CD4-positive, alpha-beta memory T cell (primary cell): ENCODE measurements at regions of chr12 and their contacts with region 1.

Region 1: GRCh38 chr12:48197971-48198671 is 5.0 kb downstream of the OR10AD1 start:
- DNase-seq: peak; percentile 87 to 94 (median 89)
- H3K4me3 ChIP-seq: peak overlapping the region; percentile 82 to 87
- H3K4me3 Mint-ChIP-seq: peak overlapping the region; percentile 84 to 95 (median 92)
- H3K27ac ChIP-seq: peak overlapping the region; percentile 99
- H3K27ac Mint-ChIP-seq: peak overlapping the region; percentile 77 to 100 (median 97)
- H3K4me1 ChIP-seq: peaks cover 42% of the 10 kb centered on the region
- H3K4me1 Mint-ChIP-seq: peaks cover 27 to 58% (median 40%) of the 10 kb centered on the region in 4 donors
- H3K27me3 ChIP-seq: no peaks in the 10 kb centered on the region
- H3K27me3 Mint-ChIP-seq: no peaks in the 10 kb centered on the region

Region 2: DNA sequence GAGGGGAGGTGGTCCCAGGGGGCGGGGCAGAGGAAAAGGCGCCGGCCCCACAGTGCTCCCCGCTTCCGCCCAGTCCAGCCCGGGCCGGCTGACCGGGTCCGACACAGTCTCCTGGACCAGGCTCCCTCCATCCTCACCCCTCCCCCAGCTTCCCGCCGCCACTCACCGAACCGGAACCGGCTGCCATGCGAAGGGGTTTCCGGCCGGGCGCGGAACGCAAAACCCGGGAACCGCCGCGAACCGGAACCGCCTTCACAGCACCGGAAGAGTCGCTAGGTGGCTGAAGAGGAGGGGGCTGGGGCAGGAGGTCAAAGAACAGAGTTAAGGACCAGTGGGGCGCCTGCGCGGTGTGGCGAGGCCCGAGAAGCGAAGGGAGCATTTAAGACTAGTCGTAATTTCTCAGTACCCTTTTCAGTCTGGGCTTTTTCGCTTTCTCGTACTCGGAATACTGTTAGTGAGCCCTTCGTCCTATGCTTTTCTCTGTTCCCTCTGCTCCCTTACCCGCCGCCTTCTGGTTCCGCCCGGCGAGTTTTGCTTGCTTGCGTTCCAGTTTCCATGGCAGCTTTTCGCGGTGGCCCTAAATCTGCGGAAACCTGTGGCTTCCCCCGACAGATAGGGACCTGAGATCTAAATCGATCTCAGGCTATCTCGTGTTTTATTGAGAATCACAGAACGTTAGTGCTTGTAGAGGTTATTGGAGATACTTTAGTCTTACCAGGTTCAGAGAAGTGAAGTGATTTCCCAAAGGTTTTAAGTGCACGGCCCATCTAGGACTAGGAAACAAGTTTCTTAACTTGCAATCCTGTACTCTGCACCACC is 92.0 kb before region 1 on chr12 and contains the start of gene SENP1:
- CTCF ChIA-PET with region 1: interaction called, 3 read pairs
- POLR2A ChIA-PET with region 1: interaction called, 28 read pairs
- intact Hi-C with region 1: loop called (anchors 2 kb)
- DNase-seq: peak; percentile 91 to 93 (median 92)
- H3K4me3 ChIP-seq: peak within 1 kb of the TSS; percentile 84 to 93
- H3K4me3 Mint-ChIP-seq: peak within 1 kb of the TSS; percentile 89 to 97 (median 92)
- H3K27ac ChIP-seq: peak within 1 kb of the TSS; percentile 96
- H3K27ac Mint-ChIP-seq: peak within 1 kb of the TSS; percentile 93 to 100 (median 99)
- H3K4me1 ChIP-seq: peaks cover 42% of the 10 kb centered on the region
- H3K4me1 Mint-ChIP-seq: peaks cover 42 to 65% (median 52%) of the 10 kb centered on the region in 4 donors
- H3K27me3 ChIP-seq: no peaks in the 10 kb centered on the region
- H3K27me3 Mint-ChIP-seq: no peaks in the 10 kb centered on the region
- total RNA-seq, gene SENP1: 28.7 to 35.1 TPM

Region 3: GRCh38 chr12:48157018-48157888 is 40.9 kb before region 1 on chr12 and contains the start of gene ASB8:
- CTCF ChIA-PET with region 1: interaction called, 33 read pairs
- POLR2A ChIA-PET with region 1: interaction called, 82 read pairs
- intact Hi-C with region 1: loop called (anchors 1 kb)
- DNase-seq: peak; percentile 98 to 99 (median 98)
- H3K4me3 ChIP-seq: peak within 1 kb of the TSS; percentile 76 to 84
- H3K4me3 Mint-ChIP-seq: peak within 1 kb of the TSS; percentile 94 to 98 (median 97)
- H3K27ac ChIP-seq: peak within 1 kb of the TSS; percentile 81
- H3K27ac Mint-ChIP-seq: peak within 1 kb of the TSS; percentile 96 to 99 (median 99)
- H3K4me1 ChIP-seq: peaks cover 23% of the 10 kb centered on the region
- H3K4me1 Mint-ChIP-seq: peaks cover 16 to 49% (median 35%) of the 10 kb centered on the region in 4 donors
- H3K27me3 ChIP-seq: no peaks in the 10 kb centered on the region
- H3K27me3 Mint-ChIP-seq: no peaks in the 10 kb centered on the region
- total RNA-seq, gene ASB8: 61.0 to 64.6 TPM

Region 4: DNA sequence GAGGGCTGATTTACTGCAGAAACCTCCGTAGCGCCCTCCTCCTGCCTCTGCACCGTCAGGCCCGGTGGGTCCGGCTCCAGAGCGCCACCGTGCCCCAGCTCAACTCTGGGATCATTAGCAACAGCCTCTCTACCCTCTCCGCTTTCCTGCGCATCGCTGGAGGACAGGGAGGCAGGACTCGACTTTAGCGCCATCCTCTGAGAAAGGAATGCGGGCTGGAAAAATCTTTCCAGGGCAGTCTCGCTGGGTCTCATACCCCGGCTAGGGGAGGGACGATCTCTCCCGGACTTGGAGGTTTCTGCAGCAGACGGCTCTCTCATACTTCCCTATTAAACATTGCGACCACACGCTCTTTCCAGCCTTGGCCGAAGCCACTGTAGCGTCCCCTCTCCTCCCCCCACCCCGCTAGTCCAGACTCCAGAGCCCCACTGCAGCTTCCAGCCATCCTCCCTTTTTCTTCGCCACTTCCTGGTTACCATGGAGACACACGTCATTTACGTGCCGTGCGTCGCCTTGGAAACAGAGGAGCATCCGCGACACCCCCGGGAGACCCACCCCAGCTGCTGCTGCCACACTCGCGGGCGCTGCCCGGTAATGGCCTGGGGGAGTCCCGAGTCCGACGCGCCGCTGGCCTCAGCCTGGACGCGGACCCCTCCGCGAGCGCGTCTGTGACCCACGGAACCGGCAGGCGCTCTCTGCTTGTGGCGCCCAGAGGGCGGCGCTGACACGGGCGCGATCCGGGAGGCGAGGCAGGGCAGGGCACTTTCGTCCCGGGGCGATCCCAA is 14.8 kb before region 1 on chr12 and contains the start of gene CCDC184:
- CTCF ChIA-PET with region 1: interaction called, 127 read pairs
- POLR2A ChIA-PET with region 1: interaction called, 65 read pairs
- intact Hi-C with region 1: loop called (anchors 1 kb)
- DNase-seq: peak; percentile 86 to 88 (median 88)
- H3K4me3 ChIP-seq: peak within 1 kb of the TSS; percentile 52 to 99
- H3K4me3 Mint-ChIP-seq: peak within 1 kb of the TSS; percentile 91 to 99 (median 95)
- H3K27ac ChIP-seq: peak within 1 kb of the TSS; percentile 61
- H3K27ac Mint-ChIP-seq: peak within 1 kb of the TSS; percentile 87 to 98 (median 96)
- H3K4me1 ChIP-seq: peaks cover 15% of the 10 kb centered on the region
- H3K4me1 Mint-ChIP-seq: peaks cover 4 to 25% (median 10%) of the 10 kb centered on the region in 4 donors
- H3K27me3 ChIP-seq: no peaks in the 10 kb centered on the region
- H3K27me3 Mint-ChIP-seq: peaks cover 12 to 14% of the 10 kb centered on the region in 2 donors
- total RNA-seq, gene CCDC184: 0.42 to 0.47 TPM

Region 5: GRCh38 chr12:48286665-48287064 is 88.5 kb after region 1 on chr12:
- CTCF ChIA-PET with region 1: interaction called, 7 read pairs
- POLR2A ChIA-PET with region 1: interaction called, 9 read pairs
- intact Hi-C with region 1: loop called (anchors 2 kb)
- DNase-seq: no peak
- H3K4me3 ChIP-seq: no peak overlapping the region
- H3K4me3 Mint-ChIP-seq: peak overlapping the region in 4 of 8 donors; percentile 22 to 78 (median 52)
- H3K27ac ChIP-seq: no peak overlapping the region
- H3K27ac Mint-ChIP-seq: peak overlapping the region; percentile 23 to 85 (median 77)
- H3K4me1 ChIP-seq: peaks cover 12% of the 10 kb centered on the region
- H3K4me1 Mint-ChIP-seq: peaks cover 10 to 18% (median 13%) of the 10 kb centered on the region in 4 donors
- H3K27me3 ChIP-seq: no peaks in the 10 kb centered on the region
- H3K27me3 Mint-ChIP-seq: peaks cover 4 to 17% of the 10 kb centered on the region in 2 donors

Region 6: GRCh38 chr12:48350249-48351021 is 152.3 kb after region 1 on chr12 and contains the start of gene ZNF641:
- CTCF ChIA-PET with region 1: interaction called, 8 read pairs
- POLR2A ChIA-PET with region 1: interaction called, 44 read pairs
- intact Hi-C with region 1: loop called (anchors 2 kb)
- DNase-seq: peak; percentile 81 to 86 (median 85)
- H3K4me3 ChIP-seq: peak within 1 kb of the TSS; percentile 57 to 72
- H3K4me3 Mint-ChIP-seq: peak within 1 kb of the TSS; percentile 92 to 97 (median 96)
- H3K27ac ChIP-seq: peak within 1 kb of the TSS; percentile 87
- H3K27ac Mint-ChIP-seq: peak within 1 kb of the TSS; percentile 93 to 98 (median 96)
- H3K4me1 ChIP-seq: peaks cover 40% of the 10 kb centered on the region
- H3K4me1 Mint-ChIP-seq: peaks cover 21 to 44% (median 35%) of the 10 kb centered on the region in 4 donors
- H3K27me3 ChIP-seq: no peaks in the 10 kb centered on the region
- H3K27me3 Mint-ChIP-seq: no peaks in the 10 kb centered on the region
- total RNA-seq, gene ZNF641: 39.9 to 41.2 TPM

Region 7: DNA sequence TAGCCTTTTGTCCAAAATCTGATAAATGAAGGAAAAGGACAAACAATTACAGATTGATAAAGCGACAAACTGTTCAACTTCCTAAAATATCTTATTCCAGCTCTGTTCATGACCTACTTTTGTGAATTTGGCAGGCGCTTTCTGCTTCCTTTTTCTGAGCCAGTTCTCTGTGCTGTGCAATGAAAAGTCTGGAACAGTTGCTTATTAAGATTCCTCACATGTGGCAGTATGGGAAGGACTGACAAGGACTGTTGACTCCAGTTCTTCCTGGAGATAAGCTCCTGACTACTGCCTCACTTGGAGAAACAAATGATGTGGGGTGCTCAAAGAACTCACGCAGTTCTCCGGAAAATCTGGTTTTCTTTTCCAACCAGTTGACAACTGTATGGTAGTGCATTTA is 215.9 kb after region 1 on chr12:
- CTCF ChIA-PET with region 1: no interaction called
- POLR2A ChIA-PET with region 1: interaction called, 24 read pairs
- intact Hi-C with region 1: no loop called
- DNase-seq: no peak
- H3K4me3 ChIP-seq: no peak overlapping the region
- H3K4me3 Mint-ChIP-seq: no peak overlapping the region
- H3K27ac ChIP-seq: no peak overlapping the region
- H3K27ac Mint-ChIP-seq: no peak overlapping the region
- H3K4me1 ChIP-seq: peaks cover 17% of the 10 kb centered on the region
- H3K4me1 Mint-ChIP-seq: peaks cover 16 to 17% (median 17%) of the 10 kb centered on the region in 4 donors
- H3K27me3 ChIP-seq: no peaks in the 10 kb centered on the region
- H3K27me3 Mint-ChIP-seq: peaks cover 18% of the 10 kb centered on the region in 2 donors